ENCODE measurements at regions of chr1 and their contacts with region 1.

Region 1: GRCh38 chr1:229479660-229480399 is 28.3 kb downstream of the NUP133 start:
- DNase-seq: no peak
- H3K4me3 Mint-ChIP-seq: no peak overlapping the region
- H3K27ac Mint-ChIP-seq: peak overlapping the region; percentile 0
- H3K4me1 Mint-ChIP-seq: no peaks in the 10 kb centered on the region
- H3K27me3 Mint-ChIP-seq: no peaks in the 10 kb centered on the region
- CTCF ChIP-seq: no peak

Region 2: DNA sequence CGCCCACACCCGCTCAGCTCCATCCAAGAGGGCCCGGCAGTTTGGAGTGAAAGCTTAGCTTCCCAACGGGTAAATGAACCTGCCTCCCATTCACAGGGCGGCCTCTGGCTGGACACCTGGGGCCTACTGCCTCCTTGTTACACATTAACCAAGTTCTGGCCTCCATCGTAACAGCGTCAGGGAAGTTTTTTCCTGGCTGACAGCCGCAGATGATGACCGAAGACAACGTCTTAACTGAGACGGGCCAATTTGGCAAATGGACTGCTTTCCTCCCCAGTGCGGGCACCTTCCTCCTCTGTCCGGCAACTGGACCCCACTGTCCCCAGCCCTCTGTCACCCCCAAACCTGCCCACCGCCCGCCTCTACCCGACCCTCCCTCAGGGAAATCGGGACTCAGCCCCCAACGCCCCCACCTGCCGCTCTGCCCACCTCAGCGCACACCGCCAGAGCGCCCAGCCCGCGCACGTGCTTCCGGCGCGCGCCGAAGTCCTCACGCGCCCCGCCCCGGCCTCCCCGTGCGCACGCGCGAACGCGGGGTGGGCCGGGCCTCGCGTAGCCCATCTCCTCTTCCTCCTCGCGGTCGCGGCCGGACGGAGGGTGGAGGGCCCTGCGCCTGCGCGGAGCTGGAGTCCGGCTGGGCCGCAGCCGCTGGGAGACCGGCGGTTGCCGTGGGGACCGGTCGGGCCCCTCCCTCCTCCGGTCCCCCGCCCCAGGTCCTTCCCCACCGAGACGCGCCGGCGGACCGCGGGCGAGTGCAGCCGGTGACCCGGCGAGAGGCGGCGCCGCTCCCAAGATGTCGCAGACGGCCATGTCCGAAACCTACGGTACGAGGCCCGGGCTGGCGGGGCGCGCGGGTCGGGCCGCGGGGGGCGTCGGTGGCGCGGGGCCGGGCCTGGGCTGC is 209.0 kb before region 1 on chr1 and contains the start of gene RAB4A:
- CTCF ChIA-PET with region 1: interaction called, 9 read pairs
- POLR2A ChIA-PET with region 1: interaction called, 8 read pairs
- intact Hi-C with region 1: loop called (anchors 5 kb)
- DNase-seq: peak; percentile 96
- H3K4me3 Mint-ChIP-seq: peak within 1 kb of the TSS; percentile 80
- H3K27ac Mint-ChIP-seq: peak within 1 kb of the TSS; percentile 77
- H3K4me1 Mint-ChIP-seq: peaks cover 48% of the 10 kb centered on the region
- H3K27me3 Mint-ChIP-seq: no peaks in the 10 kb centered on the region
- CTCF ChIP-seq: no peak
- total RNA-seq, gene RAB4A: 87.4 and 88.6 TPM in 2 replicates

Region 3: GRCh38 chr1:229452956-229453801 is 26.7 kb before region 1 on chr1:
- CTCF ChIA-PET with region 1: interaction called, 40 read pairs
- POLR2A ChIA-PET with region 1: interaction called, 6 read pairs
- intact Hi-C with region 1: no loop called
- DNase-seq: peak; percentile 51
- H3K4me3 Mint-ChIP-seq: no peak overlapping the region
- H3K27ac Mint-ChIP-seq: no peak overlapping the region
- H3K4me1 Mint-ChIP-seq: peaks cover 6% of the 10 kb centered on the region
- H3K27me3 Mint-ChIP-seq: no peaks in the 10 kb centered on the region
- CTCF ChIP-seq: peak; percentile 67

Region 4: GRCh38 chr1:229495782-229496181 is 16.0 kb after region 1 on chr1:
- CTCF ChIA-PET with region 1: interaction called, 75 read pairs
- POLR2A ChIA-PET with region 1: interaction called, 4 read pairs
- intact Hi-C with region 1: no loop called
- DNase-seq: no peak
- H3K4me3 Mint-ChIP-seq: no peak overlapping the region
- H3K27ac Mint-ChIP-seq: no peak overlapping the region
- H3K4me1 Mint-ChIP-seq: no peaks in the 10 kb centered on the region
- H3K27me3 Mint-ChIP-seq: no peaks in the 10 kb centered on the region
- CTCF ChIP-seq: no peak

Region 5: DNA sequence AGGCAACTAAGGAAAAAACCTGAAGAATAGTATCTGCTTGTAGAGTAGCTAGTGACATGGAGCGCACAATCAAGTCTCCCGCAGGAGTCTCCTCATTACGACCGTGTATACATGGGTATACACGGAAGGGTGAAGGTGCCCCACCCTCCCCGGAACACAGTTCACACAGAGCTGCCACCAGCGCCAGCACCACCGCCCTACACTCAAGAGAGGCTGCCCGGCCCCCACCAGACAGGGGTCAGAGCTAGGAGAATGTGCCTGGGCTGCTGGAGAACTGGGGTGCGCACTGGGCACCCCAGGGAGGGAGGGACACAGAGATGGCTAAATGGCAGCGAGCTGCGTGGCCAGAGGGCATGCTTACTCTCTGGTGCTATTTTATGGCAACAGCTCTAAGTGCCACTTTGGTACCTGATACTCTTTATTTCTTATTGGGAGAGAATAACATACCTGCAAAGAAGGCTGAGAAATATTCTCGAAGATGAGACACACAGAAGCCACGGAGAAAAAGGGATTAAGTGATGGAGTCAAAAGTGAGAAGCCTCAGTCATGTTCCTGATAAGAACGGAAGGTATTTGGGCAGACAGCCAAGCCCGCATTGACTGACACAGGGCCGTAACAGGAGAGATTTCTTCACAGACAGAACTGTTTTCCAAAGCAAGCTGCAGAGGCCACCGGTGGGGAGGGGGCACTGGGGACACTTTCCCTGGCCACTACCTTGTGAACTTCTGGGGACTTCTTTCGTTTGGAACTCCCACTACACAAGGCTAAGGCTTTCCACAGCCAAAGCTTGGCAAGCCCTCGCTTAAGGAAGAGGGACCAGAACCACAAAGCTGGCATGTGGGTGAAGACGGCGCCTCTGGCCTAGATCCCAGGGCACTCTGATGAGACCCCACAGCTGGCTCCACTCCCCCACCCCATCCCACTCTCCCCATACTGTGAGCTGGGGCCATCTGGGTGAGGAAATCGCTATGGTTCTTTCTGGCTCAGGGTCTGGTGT is 838.3 kb after region 1 on chr1:
- CTCF ChIA-PET with region 1: no interaction called
- POLR2A ChIA-PET with region 1: no interaction called
- intact Hi-C with region 1: no loop called
- DNase-seq: peak; percentile 73
- H3K4me3 Mint-ChIP-seq: no peak overlapping the region
- H3K27ac Mint-ChIP-seq: no peak overlapping the region
- H3K4me1 Mint-ChIP-seq: no peaks in the 10 kb centered on the region
- H3K27me3 Mint-ChIP-seq: peaks cover 15% of the 10 kb centered on the region
- CTCF ChIP-seq: no peak

Measured in MCF 10A (cell line).